ENCODE measurements at regions of chrX and their contacts with region 1.

Region 1: DNA sequence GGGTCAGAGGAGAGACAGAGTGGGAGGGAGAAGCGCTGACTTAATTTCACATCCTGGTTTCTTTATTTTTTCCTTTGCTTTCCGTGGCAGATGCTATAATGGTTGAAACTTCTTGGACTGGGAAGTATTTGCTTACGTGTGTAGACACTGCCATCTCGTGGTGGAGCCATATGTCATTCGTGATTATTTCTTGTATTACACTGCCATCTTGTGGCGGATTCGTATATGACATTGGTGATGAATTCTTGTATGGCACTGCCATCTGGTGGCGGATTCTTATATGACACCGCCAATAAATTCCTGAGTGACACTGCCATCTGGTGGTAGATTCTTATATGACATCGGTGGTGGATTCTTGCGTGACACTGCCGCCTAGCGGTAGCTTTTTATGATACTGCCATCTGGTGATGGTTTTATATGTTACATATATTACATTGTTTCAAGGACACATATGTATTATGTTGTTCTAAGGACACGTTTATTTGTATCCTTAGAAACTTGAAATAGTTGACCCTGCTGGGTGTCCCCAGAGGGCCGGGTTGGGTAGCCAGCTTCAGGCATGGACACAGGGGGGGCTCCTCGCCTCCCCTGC is 37.3 kb upstream of the CLCN4 start:
- DNase-seq: no peak
- H3K4me3 ChIP-seq: no peak overlapping the region
- H3K27ac ChIP-seq: no peak overlapping the region
- H3K4me1 ChIP-seq: no peaks in the 10 kb centered on the region
- H3K27me3 ChIP-seq: no peaks in the 10 kb centered on the region
- CTCF ChIP-seq: peak; percentile 100
- POLR2A ChIP-seq: peak in 1 of 2 donors; percentile 15

Region 2: DNA sequence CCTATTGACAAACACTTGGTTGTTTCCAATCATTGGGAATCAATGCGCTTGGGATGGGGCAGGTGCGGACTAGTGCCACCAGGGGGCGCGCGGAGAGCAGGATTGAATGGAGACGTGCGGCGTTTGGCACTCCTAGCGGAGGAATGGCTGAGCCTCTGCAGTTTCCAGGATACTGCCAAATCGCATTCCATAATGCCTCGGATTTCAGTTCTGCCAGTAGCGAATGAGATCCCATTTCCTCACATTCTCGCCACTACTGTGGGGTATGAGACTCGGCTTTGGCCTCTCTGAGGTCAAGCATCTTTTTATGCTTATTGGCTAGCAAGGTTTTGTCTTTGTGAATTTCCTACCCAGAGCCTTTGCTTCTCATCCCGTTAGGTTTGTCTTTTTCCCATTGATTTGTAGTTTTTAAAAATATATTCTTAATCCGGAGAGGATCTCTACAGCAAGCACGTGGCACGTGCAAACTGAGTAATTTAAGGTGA is 123.6 kb before region 1 on chrX:
- intact Hi-C with region 1: loop called (anchors 5 kb)
- DNase-seq: no peak
- H3K4me3 ChIP-seq: no peak overlapping the region
- H3K27ac ChIP-seq: no peak overlapping the region
- H3K4me1 ChIP-seq: no peaks in the 10 kb centered on the region
- H3K27me3 ChIP-seq: no peaks in the 10 kb centered on the region
- CTCF ChIP-seq: peak; percentile 80 to 98 (median 94)
- POLR2A ChIP-seq: no peak

Region 3: DNA sequence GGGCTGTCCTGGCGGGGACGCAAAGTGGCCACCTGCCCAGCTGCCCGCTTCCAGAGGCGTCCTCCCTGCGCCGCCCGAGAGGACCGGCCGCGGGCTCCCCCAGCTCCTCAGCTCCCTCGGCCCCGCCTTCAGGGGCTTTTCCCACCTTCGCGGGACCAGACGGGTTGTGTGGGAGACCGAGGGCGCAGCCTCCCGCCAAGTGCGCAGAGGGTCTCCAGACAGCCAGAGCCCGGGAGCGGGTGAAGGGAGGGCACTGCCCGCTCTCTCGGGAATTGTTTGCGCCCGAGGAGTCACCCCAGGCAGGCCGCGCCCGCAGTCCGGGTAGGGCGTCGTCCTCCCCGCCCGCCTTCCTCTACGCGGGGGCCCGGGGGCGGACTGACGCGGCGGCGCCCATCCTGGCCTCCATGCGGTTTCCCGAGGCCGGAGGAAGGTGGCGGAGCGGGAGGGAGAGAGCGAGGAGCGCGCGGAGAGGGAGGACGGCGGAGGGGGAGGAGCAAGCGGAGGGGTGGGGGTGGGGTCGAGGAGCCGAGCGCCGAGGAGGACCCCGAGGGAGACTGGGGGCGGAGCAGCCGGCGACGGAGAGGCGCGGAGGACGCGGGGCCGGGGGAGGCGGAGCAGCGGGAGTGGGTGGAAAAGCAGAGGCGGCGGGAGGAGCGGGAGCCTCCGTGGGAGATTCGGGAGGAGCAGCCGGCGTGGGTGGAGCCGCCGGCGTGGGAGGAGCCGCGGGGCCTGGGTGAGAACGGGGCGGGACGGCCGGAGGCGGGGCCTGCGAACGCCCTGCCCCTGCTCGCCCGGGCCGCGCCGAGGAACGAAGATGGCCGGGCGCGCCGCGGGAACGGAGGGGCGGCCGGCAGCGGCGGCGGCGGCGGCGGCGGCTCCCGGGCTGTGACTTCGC is 104.8 kb before region 1 on chrX:
- intact Hi-C with region 1: loop called (anchors 5 kb)
- DNase-seq: peak in 1 of 2 donors; percentile 91
- H3K4me3 ChIP-seq: peak overlapping the region; percentile 57 to 61
- H3K27ac ChIP-seq: peak overlapping the region; percentile 81
- H3K4me1 ChIP-seq: peaks cover 11% of the 10 kb centered on the region
- H3K27me3 ChIP-seq: no peaks in the 10 kb centered on the region
- CTCF ChIP-seq: no peak
- POLR2A ChIP-seq: peak in 1 of 2 donors; percentile 50